PC-3 (cell line): ENCODE measurements at regions of chr1 and their contacts with region 1.

Region 1: GRCh38 chr1:169546087-169546995 is 39.9 kb downstream of the F5 start:
- DNase-seq: peak; percentile 90
- ATAC-seq: peak; percentile 79
- H3K4me3 ChIP-seq: no peak overlapping the region
- H3K27ac ChIP-seq: no peak overlapping the region
- H3K4me1 ChIP-seq: no peaks in the 10 kb centered on the region
- H3K27me3 ChIP-seq: no peaks in the 10 kb centered on the region
- CTCF ChIP-seq: peak; percentile 94

Region 2: GRCh38 chr1:169466259-169467230 is 79.8 kb before region 1 on chr1:
- CTCF ChIA-PET with region 1: interaction called, 9 read pairs
- POLR2A ChIA-PET with region 1: no interaction called
- intact Hi-C with region 1: loop called (anchors 1 kb)
- DNase-seq: peak; percentile 75
- ATAC-seq: peak; percentile 36; the same call in 1 of the 2 replicates
- H3K4me3 ChIP-seq: no peak overlapping the region
- H3K27ac ChIP-seq: no peak overlapping the region
- H3K4me1 ChIP-seq: peaks cover 16% of the 10 kb centered on the region
- H3K27me3 ChIP-seq: no peaks in the 10 kb centered on the region
- CTCF ChIP-seq: peak; percentile 70

Region 3: DNA sequence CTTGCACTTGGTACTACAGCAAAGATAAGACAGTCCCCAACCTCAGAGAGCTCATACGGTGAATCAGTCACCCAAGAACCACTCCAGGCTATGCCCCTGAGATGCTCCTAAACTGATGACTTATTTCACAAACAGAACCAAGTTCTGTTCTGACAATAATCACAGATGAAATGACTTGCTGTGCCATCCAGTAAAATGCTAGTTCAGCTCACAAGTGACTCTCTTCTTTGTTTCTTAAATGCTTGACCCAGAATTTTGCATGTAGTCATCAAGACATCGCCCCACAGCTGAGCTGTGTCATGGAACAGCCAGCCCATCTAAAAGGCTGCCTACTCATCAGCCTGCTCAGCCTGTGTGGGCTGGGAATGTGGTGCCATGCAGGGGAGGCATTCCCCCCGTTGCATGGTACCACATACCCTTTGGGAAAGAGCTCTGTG is 54.5 kb before region 1 on chr1:
- CTCF ChIA-PET with region 1: no interaction called
- POLR2A ChIA-PET with region 1: no interaction called
- intact Hi-C with region 1: no loop called
- DNase-seq: no peak
- ATAC-seq: no peak
- H3K4me3 ChIP-seq: no peak overlapping the region
- H3K27ac ChIP-seq: no peak overlapping the region
- H3K4me1 ChIP-seq: peaks cover 16% of the 10 kb centered on the region
- H3K27me3 ChIP-seq: no peaks in the 10 kb centered on the region
- CTCF ChIP-seq: no peak

Region 4: GRCh38 chr1:169514566-169515270 is 31.6 kb before region 1 on chr1:
- CTCF ChIA-PET with region 1: interaction called, 4 read pairs
- POLR2A ChIA-PET with region 1: no interaction called
- intact Hi-C with region 1: loop called (anchors 1 kb)
- DNase-seq: peak; percentile 32
- ATAC-seq: peak; percentile 44
- H3K4me3 ChIP-seq: no peak overlapping the region
- H3K27ac ChIP-seq: 0 out of 2 replicates have a peak overlapping the region, but pooled peaks have one; percentile 2
- H3K4me1 ChIP-seq: peaks cover 58% of the 10 kb centered on the region
- H3K27me3 ChIP-seq: no peaks in the 10 kb centered on the region
- CTCF ChIP-seq: no peak

Region 5: DNA sequence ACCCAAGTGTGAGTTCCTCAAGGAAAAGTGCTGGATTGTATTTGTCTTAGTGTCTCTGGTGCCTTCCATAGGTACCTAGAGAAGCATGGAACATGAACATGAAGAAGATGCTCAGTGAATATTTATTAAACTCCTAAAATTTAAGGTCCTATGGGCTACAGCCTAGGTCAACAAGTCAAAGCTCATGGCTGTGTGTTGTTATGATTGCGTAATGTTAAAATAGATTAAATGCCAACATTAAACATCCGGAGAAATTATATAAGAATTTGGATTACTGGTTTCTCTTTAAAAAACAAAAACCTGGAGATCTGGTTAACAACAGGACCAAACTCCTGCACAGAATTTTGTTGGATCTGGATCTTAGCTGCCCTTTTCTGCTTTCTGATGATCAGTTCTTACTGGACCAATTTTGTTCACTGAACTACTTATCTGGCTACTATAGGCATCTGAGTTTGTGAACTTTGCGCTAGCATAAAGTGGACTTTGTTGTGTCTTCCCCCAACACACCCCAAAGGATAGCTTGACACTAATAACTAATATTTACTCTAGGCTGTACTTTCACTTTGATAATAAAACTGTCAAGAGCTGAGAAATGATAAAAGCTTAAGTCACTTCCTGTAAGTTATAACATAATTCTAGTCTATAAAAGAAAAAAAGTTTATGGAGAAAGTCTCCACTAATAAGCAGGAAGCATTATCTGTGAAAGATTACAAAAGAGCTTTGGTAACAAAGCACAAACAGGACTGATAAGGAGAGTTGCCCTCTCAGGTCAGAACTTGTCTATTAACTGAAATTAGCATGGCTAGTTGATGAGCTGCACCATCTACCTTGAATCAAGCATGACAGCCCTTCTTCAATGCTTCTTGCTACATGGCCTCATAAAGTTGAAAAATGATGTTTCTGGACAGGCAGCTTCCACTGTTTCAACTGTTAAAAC is 19.3 kb after region 1 on chr1:
- CTCF ChIA-PET with region 1: no interaction called
- POLR2A ChIA-PET with region 1: no interaction called
- intact Hi-C with region 1: no loop called
- DNase-seq: peak; percentile 66
- ATAC-seq: peak; percentile 60
- H3K4me3 ChIP-seq: no peak overlapping the region
- H3K27ac ChIP-seq: peak overlapping the region; percentile 30
- H3K4me1 ChIP-seq: peaks cover 42% of the 10 kb centered on the region
- H3K27me3 ChIP-seq: no peaks in the 10 kb centered on the region
- CTCF ChIP-seq: no peak

Region 6: DNA sequence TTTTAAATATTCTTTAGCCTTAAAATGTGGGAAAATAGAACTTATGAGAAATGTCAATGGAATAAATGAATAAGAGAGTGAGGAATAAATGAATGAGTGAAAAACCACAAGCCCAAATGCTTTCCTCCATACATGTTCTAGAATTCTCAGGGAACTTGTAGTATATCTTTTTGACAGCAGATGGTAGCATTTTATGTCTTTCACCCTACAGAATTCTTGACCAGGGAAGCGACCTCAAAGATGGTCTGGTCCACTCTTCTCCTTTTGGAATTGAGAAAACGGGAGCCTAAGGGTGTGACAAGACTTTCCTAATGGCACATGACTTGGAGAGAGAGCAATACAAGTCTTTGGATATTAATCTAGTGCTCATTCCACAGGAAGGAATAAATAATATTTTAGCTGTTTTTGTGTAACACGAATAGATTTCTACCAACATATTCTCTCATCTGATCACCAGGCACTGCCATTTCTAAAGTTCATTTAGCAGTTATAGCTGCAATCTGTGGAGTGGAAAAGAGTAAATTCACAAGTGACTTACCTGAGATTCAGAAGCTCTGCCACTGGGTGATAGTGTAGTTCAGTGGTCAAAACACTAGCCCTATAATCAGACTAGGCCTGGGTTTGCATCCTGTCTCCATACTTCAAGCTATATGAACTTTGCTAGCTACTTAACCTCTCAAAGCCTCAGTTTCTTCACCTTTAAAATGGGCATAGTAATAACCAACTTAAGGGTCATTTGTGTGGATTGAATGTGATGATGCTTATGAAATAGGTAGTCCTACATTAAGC is 54.9 kb after region 1 on chr1:
- CTCF ChIA-PET with region 1: no interaction called
- POLR2A ChIA-PET with region 1: no interaction called
- intact Hi-C with region 1: loop called (anchors 2 kb)
- DNase-seq: peak; percentile 74
- ATAC-seq: peak; percentile 76
- H3K4me3 ChIP-seq: no peak overlapping the region
- H3K27ac ChIP-seq: no peak overlapping the region
- H3K4me1 ChIP-seq: no peaks in the 10 kb centered on the region
- H3K27me3 ChIP-seq: peaks cover 39% of the 10 kb centered on the region
- CTCF ChIP-seq: peak; percentile 78

Region 7: DNA sequence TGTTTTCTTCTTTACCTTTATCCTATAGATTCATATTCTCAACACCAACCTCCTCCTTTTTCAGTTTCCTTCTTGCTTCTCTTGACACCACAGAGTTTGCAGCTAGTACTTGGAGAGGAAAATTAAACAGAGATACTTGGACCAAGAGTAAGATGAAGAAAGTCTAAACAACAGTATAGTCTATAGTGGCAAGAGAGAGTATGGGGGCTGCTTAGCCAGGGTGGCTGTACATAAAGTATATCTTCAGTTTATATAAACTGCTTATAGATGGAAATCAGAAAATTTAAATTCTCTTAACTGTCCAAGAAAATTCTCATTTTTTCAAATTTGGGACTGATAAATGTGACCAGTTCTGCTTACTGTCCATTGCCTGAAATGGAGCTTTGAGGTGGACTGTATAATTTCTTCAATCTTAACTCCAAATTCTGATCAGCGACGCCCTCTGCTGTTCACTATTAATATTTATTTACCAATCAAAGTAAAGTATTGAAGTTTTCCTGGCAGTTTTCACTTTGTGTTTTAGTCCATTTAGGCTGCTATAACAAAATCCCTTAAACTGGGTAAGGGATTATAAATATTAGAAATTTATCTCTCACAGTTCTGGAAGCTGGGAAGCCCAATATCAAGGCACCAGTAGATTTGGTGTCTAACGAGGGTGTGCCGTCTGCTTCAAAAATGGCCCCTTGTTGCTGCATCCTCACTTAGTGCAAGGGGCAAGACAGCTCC is 263.2 kb after region 1 on chr1:
- CTCF ChIA-PET with region 1: no interaction called
- POLR2A ChIA-PET with region 1: no interaction called
- intact Hi-C with region 1: loop called (anchors 2 kb)
- DNase-seq: peak; percentile 74
- ATAC-seq: peak; percentile 49
- H3K4me3 ChIP-seq: no peak overlapping the region
- H3K27ac ChIP-seq: no peak overlapping the region
- H3K4me1 ChIP-seq: peaks cover 8% of the 10 kb centered on the region
- H3K27me3 ChIP-seq: no peaks in the 10 kb centered on the region
- CTCF ChIP-seq: peak; percentile 87